ENCODE measurements at regions of chr2 and their contacts with region 1.

Region 1: GRCh38 chr2:202989749-202990148 is 24.9 kb upstream of the NBEAL1 start:
- DNase-seq: no peak
- ATAC-seq: no peak
- H3K4me3 ChIP-seq: no peak overlapping the region
- H3K27ac ChIP-seq: no peak overlapping the region
- H3K4me1 ChIP-seq: no peaks in the 10 kb centered on the region
- H3K27me3 ChIP-seq: no peaks in the 10 kb centered on the region
- CTCF ChIP-seq: no peak

Region 2: DNA sequence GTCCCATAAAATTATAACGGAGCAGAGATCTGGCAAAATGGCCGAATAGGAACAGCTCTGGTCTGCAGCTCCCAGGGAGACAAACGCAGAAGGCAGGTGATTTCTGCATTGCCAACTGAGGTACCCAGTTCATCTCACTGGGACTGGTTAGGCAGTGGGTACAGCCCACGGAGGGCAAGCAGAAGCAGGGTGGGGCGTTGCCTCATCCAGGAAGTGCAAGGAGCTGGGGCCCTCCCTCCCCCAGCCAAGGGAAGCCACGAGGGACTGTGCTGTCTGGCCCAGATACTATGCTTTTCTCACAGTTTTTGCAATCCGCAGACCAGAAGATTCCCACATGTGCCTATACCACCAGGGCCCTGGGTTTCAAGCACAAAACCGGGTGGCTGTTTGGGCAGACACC is 140.9 kb before region 1 on chr2:
- intact Hi-C with region 1: loop called in 1 of 2 experiments (anchors 10 kb)
- DNase-seq: no peak
- ATAC-seq: no peak
- H3K4me3 ChIP-seq: no peak overlapping the region
- H3K27ac ChIP-seq: no peak overlapping the region
- H3K4me1 ChIP-seq: no peaks in the 10 kb centered on the region
- H3K27me3 ChIP-seq: no peaks in the 10 kb centered on the region
- CTCF ChIP-seq: no peak

Region 3: DNA sequence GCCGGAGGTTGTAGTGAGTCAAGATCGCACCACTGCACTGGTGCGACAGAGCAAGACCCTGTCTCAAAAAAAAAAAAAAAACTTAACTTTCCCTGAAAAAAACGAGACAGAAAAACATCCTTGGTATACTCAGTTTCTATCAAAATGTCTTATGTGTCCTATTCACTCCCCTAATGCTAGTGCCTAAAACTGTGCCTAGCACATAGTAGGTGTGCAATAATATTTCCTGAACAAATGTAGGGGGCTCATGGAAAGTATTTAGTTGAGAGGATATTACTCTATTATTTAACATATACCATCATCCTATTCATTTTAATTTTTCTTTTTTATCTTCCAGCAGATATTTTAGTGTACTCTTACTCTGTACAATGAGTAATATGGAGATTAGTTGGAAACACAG is 145.4 kb after region 1 on chr2:
- intact Hi-C with region 1: loop called in 1 of 2 experiments (anchors 10 kb)
- DNase-seq: no peak
- ATAC-seq: no peak
- H3K4me3 ChIP-seq: no peak overlapping the region
- H3K27ac ChIP-seq: no peak overlapping the region
- H3K4me1 ChIP-seq: no peaks in the 10 kb centered on the region
- H3K27me3 ChIP-seq: no peaks in the 10 kb centered on the region
- CTCF ChIP-seq: no peak

Region 4: DNA sequence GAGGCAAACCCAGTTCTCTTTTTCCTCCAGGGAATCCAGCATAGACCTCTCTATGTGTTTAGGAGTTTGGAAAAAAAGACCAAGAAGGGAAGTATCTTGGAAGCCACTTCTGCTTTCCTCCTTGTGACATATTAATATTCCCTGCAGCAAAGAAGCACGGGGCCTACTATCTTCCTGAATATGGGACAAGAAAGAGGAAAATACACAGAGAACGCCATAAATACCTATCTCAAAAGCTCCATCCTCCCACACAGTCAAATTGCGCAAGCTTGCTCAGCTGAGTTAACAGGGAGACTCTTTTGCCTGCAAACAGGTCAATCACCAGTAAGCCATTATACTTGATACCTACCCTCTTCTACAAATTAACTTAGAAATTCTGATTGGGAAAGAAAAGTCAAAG is 562.0 kb after region 1 on chr2:
- intact Hi-C with region 1: no loop called
- DNase-seq: no peak
- ATAC-seq: no peak
- H3K4me3 ChIP-seq: no peak overlapping the region
- H3K27ac ChIP-seq: no peak overlapping the region
- H3K4me1 ChIP-seq: no peaks in the 10 kb centered on the region
- H3K27me3 ChIP-seq: no peaks in the 10 kb centered on the region
- CTCF ChIP-seq: no peak

Measured in psoas muscle (tissue), 8 donors.